Aorta (tissue), 5 donors: ENCODE measurements at regions of chr7 and their contacts with region 1.

Region 1: GRCh38 chr7:6175645-6176044 is 96.8 kb downstream of the CYTH3 start:
- DNase-seq: peak in 1 of 2 donors; percentile 67
- ATAC-seq: no peak
- H3K4me3 ChIP-seq: no peak overlapping the region
- H3K27ac ChIP-seq: no peak overlapping the region
- H3K4me1 ChIP-seq: peaks cover 4 to 5% of the 10 kb centered on the region in 2 donors
- H3K27me3 ChIP-seq: no peaks in the 10 kb centered on the region

Region 2: GRCh38 chr7:6228361-6229229 is 53.0 kb after region 1 on chr7:
- intact Hi-C with region 1: loop called in 1 of 2 experiments (anchors 10 kb)
- DNase-seq: no peak
- ATAC-seq: peak; percentile 55
- H3K4me3 ChIP-seq: no peak overlapping the region
- H3K27ac ChIP-seq: no peak overlapping the region
- H3K4me1 ChIP-seq: peaks cover 3 to 5% of the 10 kb centered on the region in 2 donors
- H3K27me3 ChIP-seq: no peaks in the 10 kb centered on the region